PC-9 (cell line): ENCODE measurements at regions of chr3 and their contacts with region 1.

Region 1: GRCh38 chr3:71652781-71653413 is 69.4 kb upstream of the FOXP1 start:
- DNase-seq: no peak
- H3K4me3 ChIP-seq: no peak overlapping the region
- H3K27ac ChIP-seq: no peak overlapping the region
- H3K4me1 ChIP-seq: no peaks in the 10 kb centered on the region
- H3K27me3 ChIP-seq: peaks cover 5% of the 10 kb centered on the region; the same call in 1 of the 2 replicates
- CTCF ChIP-seq: peak; percentile 56

Region 2: GRCh38 chr3:70064194-70064779 is 1588.6 kb before region 1 on chr3:
- CTCF ChIA-PET with region 1: no interaction called
- POLR2A ChIA-PET with region 1: no interaction called
- intact Hi-C with region 1: loop called (anchors 5 kb)
- DNase-seq: no peak
- H3K4me3 ChIP-seq: no peak overlapping the region
- H3K27ac ChIP-seq: no peak overlapping the region
- H3K4me1 ChIP-seq: no peaks in the 10 kb centered on the region
- H3K27me3 ChIP-seq: peaks cover 1% of the 10 kb centered on the region; the same call in 1 of the 2 replicates
- CTCF ChIP-seq: peak; percentile 65

Region 3: GRCh38 chr3:70531063-70531657 is 1121.7 kb before region 1 on chr3:
- CTCF ChIA-PET with region 1: no interaction called
- POLR2A ChIA-PET with region 1: no interaction called
- intact Hi-C with region 1: loop called (anchors 5 kb)
- DNase-seq: no peak
- H3K4me3 ChIP-seq: no peak overlapping the region
- H3K27ac ChIP-seq: no peak overlapping the region
- H3K4me1 ChIP-seq: no peaks in the 10 kb centered on the region
- H3K27me3 ChIP-seq: no peaks in the 10 kb centered on the region
- CTCF ChIP-seq: peak; percentile 60; the same call in 1 of the 2 replicates

Region 4: GRCh38 chr3:70550723-70551319 is 1102.1 kb before region 1 on chr3:
- CTCF ChIA-PET with region 1: interaction called, 3 read pairs
- POLR2A ChIA-PET with region 1: no interaction called
- intact Hi-C with region 1: loop called (anchors 2 kb)
- DNase-seq: peak in 1 of 2 experiments; percentile 27
- H3K4me3 ChIP-seq: no peak overlapping the region
- H3K27ac ChIP-seq: no peak overlapping the region
- H3K4me1 ChIP-seq: no peaks in the 10 kb centered on the region
- H3K27me3 ChIP-seq: peaks cover 5% of the 10 kb centered on the region; the same call in 1 of the 2 replicates
- CTCF ChIP-seq: peak; percentile 61